ENCODE measurements at regions of chr7 and their contacts with region 1.

Region 1: GRCh38 chr7:140170375-140170774 is 6.4 kb downstream of the KDM7A start:
- DNase-seq: no peak
- ATAC-seq: no peak
- H3K4me3 Mint-ChIP-seq: no peak overlapping the region
- H3K27ac Mint-ChIP-seq: no peak overlapping the region
- H3K4me1 Mint-ChIP-seq: peaks cover 68% of the 10 kb centered on the region
- H3K27me3 Mint-ChIP-seq: no peaks in the 10 kb centered on the region
- CTCF ChIP-seq: no peak

Region 2: GRCh38 chr7:140136073-140136472 is 34.3 kb before region 1 on chr7:
- CTCF ChIA-PET with region 1: no interaction called
- POLR2A ChIA-PET with region 1: no interaction called
- intact Hi-C with region 1: no loop called
- DNase-seq: no peak
- ATAC-seq: no peak
- H3K4me3 Mint-ChIP-seq: no peak overlapping the region
- H3K27ac Mint-ChIP-seq: no peak overlapping the region
- H3K4me1 Mint-ChIP-seq: peaks cover 26% of the 10 kb centered on the region
- H3K27me3 Mint-ChIP-seq: no peaks in the 10 kb centered on the region
- CTCF ChIP-seq: no peak

Region 3: GRCh38 chr7:140153666-140154181 is 16.7 kb before region 1 on chr7:
- CTCF ChIA-PET with region 1: interaction called, 4 read pairs
- POLR2A ChIA-PET with region 1: no interaction called
- intact Hi-C with region 1: loop called (anchors 2 kb)
- DNase-seq: no peak
- ATAC-seq: peak; percentile 40
- H3K4me3 Mint-ChIP-seq: peak overlapping the region; percentile 64
- H3K27ac Mint-ChIP-seq: peak overlapping the region; percentile 46
- H3K4me1 Mint-ChIP-seq: peaks cover 71% of the 10 kb centered on the region
- H3K27me3 Mint-ChIP-seq: no peaks in the 10 kb centered on the region
- CTCF ChIP-seq: no peak

Measured in activated B cell treated with CpG ODN at 0.5 μM for 24 hours (primary cell).